Right ventricle myocardium superior (tissue), 1 donor: ENCODE measurements at regions of chr7 and their contacts with region 1.

Region 1: DNA sequence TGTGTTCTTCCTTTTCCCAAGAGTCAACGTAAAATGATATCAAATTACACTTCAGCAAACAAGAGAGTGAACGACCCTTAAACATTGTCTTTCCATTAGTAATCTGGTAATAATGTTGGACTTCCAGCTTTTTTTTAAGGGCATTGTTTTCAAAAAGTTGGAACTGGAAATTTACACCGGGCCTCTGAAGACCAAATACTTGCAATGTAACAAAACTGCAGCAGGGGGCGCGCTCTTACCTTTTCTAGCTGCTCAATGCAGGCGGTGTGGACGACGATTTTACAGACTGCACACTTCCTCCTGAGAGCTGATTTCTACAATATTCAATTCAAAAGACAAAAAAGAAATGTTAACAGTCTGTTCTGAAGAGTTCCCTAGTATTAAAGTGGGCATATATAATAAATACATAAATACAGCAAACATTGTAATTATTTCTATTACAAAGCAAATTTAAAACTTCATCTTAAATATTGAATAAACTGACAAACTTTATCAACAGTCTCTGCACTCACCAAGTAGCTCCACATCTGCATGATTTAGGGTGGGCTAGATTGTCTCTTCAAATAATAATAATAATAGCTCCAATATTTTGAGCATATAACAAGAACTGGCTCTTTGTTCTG is 190.4 kb downstream of the DGKI start:
- DNase-seq: peak; percentile 85
- ATAC-seq: peak; percentile 93

Region 2: DNA sequence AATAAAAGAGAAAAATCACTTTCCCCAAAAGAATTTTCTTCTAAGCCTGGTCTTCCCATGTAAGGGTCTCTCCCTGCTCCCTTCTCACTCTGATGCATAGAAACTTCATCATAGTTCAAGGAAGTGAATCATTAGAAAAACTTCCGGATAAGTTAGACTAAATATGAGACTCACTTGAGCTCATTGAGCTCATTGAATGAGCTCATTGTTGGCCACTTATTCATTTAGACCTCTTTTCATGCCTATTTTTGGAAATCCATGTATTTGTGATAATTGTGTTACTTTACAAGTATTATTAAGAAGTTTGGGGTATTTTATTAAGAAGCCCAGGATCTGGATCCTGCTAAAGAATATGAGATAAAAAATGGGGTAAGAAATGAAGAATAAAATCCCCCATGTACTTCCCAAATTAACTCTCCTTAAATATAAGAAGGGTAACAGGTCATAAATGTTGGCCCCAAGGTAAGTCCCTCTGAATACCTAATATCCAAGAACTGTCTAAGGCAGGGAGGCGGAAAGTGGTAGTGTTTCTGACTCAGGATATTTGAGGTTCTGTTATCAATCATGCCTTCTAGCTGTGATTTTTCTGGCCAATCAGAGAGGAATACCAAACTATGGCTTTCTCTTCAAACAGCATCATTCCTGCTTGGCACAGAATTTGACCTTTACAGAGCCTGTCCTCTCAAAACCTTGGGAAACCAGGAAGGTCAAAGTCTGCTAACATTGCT is 76.3 kb before region 1 on chr7:
- intact Hi-C with region 1: no loop called
- DNase-seq: no peak
- ATAC-seq: no peak

Region 3: DNA sequence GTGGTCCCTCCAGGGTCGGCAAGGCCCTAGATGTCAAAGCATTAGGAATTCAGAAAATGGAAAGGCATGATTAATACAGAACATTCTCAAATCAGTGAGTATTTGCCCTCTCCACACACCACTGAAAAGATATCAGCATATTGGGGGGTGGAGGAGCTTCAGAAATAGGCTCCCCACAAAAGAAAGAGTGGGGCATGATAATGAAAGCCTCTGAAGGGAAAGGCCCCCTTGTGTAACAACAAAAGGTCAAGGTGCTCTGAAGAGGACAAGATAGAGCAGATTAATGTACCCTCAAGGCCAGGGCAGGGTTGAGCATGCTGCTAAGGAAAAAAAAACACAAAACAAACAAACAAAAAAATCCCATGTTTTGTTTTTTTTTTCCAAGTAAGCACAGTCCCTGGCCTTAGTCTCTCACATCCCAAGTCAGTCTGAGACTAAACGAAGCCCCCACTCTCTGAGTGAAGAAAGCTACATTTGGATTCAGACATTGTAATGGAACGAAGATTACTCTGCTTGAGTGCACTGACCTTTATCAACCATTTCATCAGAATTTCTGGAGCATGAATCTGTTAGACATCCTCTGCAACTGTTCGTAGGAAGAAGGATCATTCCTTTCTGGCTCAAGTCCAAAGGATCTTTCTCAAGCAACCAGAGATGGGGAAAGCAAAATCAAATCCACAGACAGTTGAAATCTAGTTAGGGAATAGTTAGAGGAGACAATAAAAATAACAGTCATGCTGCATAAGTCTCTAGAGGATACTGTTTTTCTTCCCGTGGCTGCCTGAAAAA is 217.8 kb after region 1 on chr7:
- intact Hi-C with region 1: no loop called
- DNase-seq: no peak
- ATAC-seq: no peak

Region 4: GRCh38 chr7:138008547-138009349 is 352.4 kb after region 1 on chr7:
- intact Hi-C with region 1: loop called (anchors 5 kb)
- DNase-seq: no peak
- ATAC-seq: peak; percentile 77